ENCODE measurements at regions of chr9 and their contacts with region 1.

Region 1: DNA sequence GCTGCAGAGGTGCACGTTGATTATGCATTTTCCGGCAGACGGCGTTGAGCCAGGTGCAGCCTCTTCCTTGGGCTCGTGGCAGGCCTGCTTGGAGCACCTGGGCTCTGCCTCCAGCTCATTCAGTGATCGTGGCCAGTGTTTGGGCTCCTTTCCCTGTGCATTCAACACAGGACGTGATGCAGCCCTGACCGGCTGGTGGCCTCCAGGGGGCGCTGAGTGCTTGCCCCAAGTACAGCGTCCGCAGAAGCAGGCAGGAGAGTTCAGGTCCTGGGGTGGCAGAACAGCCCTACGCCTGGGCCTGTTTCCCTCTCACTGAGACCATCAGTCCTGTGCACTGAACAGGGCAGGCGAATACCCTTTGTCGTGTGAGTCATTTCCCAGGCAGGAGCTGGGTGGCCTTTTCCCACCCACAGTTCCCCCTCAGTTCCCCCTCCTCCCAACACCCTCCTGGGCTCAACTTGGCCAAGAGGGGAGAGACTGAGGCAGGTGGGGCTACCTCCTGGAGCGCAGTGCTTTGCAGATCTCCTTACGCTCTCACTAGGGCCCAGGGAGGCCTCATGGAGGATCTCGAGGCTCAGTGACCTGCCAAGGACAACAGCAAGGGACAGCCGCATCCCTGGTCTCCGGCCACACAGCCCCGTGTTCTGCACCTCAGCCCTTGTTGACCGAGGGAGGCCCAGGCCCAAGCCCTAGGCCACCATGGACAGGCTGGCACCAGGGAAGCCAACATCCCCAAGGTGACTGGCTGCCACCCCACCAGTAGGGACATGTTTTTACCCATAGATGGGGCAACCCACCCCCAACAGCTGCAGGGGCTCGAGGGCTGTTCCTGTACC is 52.9 kb downstream of the LRSAM1 start:
- DNase-seq: peak; percentile 70
- H3K4me3 Mint-ChIP-seq: no peak overlapping the region
- H3K27ac Mint-ChIP-seq: no peak overlapping the region
- H3K4me1 Mint-ChIP-seq: peaks cover 5% of the 10 kb centered on the region
- H3K27me3 Mint-ChIP-seq: no peaks in the 10 kb centered on the region

Region 2: GRCh38 chr9:127586537-127586936 is 82.4 kb after region 1 on chr9:
- intact Hi-C with region 1: loop called (anchors 1 kb)
- DNase-seq: peak; percentile 33
- H3K4me3 Mint-ChIP-seq: no peak overlapping the region
- H3K27ac Mint-ChIP-seq: no peak overlapping the region
- H3K4me1 Mint-ChIP-seq: peaks cover 11% of the 10 kb centered on the region
- H3K27me3 Mint-ChIP-seq: peaks cover 14% of the 10 kb centered on the region

Region 3: GRCh38 chr9:128072144-128073021 is 568.2 kb after region 1 on chr9:
- intact Hi-C with region 1: no loop called
- DNase-seq: no peak
- H3K4me3 Mint-ChIP-seq: peak overlapping the region; percentile 61
- H3K27ac Mint-ChIP-seq: peak overlapping the region; percentile 88
- H3K4me1 Mint-ChIP-seq: peaks cover 45% of the 10 kb centered on the region
- H3K27me3 Mint-ChIP-seq: no peaks in the 10 kb centered on the region